ENCODE measurements at regions of chr13 and their contacts with region 1.

Region 1: DNA sequence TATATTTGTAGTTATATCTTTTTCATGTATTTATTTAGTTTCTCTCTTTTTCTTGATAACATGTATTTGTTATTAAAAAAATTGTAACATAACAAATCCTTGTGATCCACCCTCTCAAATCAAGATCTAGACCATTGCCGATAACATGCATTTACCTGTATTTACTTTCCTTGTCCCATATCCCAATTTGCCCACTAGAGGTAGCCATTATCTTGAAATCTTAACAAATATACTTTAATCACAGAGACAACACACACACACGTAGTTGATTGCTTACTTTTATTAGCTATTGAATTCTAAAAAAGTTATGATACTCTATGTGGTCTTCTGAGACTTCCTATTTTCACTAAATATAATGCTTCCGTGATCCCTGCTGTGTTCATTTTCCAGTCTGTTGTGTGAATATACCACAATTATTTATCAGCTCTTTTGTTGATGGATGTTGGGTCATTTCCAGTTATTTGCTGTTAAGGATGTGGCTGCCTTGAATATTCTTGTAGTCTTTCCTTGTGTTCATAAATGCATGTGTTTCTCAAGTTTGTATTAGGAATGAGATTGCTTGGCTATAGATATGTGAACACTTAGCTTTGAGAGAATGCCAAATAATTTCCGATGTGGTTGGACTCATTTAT is 31.3 kb upstream of the ZMYM2 start:
- DNase-seq: peak; percentile 62
- ATAC-seq: peak; percentile 77
- H3K4me3 ChIP-seq: peak overlapping the region in 1 of 2 experiments; percentile 25; a peak in 1 of 4 replicates
- H3K27ac ChIP-seq: peak overlapping the region; percentile 47; the same call in 1 of the 2 replicates
- H3K4me1 ChIP-seq: peaks cover 7 to 21% of the 10 kb centered on the region in 2 experiments; a peak in 3 of 4 replicates
- H3K27me3 ChIP-seq: no peaks in the 10 kb centered on the region
- CTCF ChIP-seq: peak; percentile 64 to 77 (median 65); a peak in 5 of 6 replicates
- POLR2A ChIP-seq: no peak
- RAD21 ChIP-seq: peak; percentile 68

Region 2: GRCh38 chr13:19726611-19727010 is 200.6 kb before region 1 on chr13:
- CTCF ChIA-PET with region 1: no interaction called
- POLR2A ChIA-PET with region 1: no interaction called
- RAD21 ChIA-PET with region 1: no interaction called
- intact Hi-C with region 1: no loop called
- DNase-seq: no peak
- ATAC-seq: no peak
- H3K4me3 ChIP-seq: no peak overlapping the region
- H3K27ac ChIP-seq: no peak overlapping the region
- H3K4me1 ChIP-seq: no peaks in the 10 kb centered on the region
- H3K27me3 ChIP-seq: no peaks in the 10 kb centered on the region
- CTCF ChIP-seq: no peak
- POLR2A ChIP-seq: no peak
- RAD21 ChIP-seq: no peak

Region 3: DNA sequence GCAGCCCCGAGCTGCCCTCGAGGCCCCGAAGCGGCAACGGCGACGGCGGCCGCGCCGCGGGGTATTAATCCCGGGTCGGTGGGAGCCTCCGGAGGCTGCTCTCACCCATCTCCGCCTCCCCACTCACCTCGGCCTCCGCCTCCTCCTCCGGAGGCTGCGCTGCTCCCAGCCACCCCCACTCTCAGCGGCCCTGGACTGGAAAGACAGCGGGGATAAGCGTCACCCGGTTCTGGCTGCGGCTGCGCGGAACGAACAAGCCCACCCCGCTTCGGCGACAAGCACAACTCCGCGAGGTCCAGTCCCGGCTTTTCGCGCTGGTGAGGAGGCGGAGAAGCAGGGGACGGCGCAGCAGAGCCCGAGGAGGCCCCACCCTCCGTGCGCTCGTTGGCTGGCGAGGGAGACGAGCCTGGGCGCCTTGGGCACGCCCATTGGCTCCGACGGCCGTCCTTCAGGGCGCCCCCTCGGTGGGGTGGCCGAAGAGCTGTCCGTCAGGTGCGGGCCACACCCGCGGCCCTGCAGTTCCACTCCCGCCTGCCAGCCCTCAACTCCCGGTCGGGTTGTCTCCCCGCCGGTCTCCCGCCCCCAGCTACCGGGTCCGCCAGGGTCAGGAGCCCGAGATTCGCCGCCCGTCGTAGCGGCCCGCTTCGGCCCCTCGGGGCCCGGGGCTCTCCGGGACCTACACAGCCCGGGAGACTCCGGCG is 63.8 kb before region 1 on chr13 and contains the start of gene ZMYM5:
- CTCF ChIA-PET with region 1: no interaction called
- POLR2A ChIA-PET with region 1: no interaction called
- RAD21 ChIA-PET with region 1: no interaction called
- intact Hi-C with region 1: no loop called
- DNase-seq: peak; percentile 95
- ATAC-seq: peak; percentile 88
- H3K4me3 ChIP-seq: peak within 1 kb of the TSS; percentile 79 to 90
- H3K27ac ChIP-seq: peak within 1 kb of the TSS; percentile 98
- H3K4me1 ChIP-seq: peaks cover 23 to 41% of the 10 kb centered on the region in 2 experiments
- H3K27me3 ChIP-seq: no peaks in the 10 kb centered on the region
- CTCF ChIP-seq: no peak
- POLR2A ChIP-seq: peak; percentile 19
- RAD21 ChIP-seq: no peak
- total RNA-seq, gene ZMYM5: 9.6 TPM

Region 4: DNA sequence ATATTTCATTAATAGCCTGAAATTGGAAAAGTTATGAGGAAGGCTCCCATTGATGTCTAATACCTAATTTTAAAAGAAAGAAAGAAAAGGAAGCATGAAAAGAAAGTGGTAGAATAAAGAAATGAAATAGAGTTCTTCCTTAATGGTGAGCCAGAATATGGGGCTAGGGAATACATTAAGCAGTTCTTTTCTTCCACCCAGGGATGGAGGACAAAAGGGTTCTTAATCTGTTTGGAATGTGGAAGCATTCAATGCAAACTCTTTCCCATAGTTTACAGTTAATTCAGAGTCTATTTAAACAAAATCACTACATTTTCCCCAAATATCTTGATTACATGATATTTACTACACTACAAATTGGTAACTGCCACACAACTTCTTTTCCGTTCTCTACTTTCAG is 12.9 kb after region 1 on chr13:
- CTCF ChIA-PET with region 1: interaction called, 13 read pairs
- POLR2A ChIA-PET with region 1: interaction called, 4 read pairs
- RAD21 ChIA-PET with region 1: no interaction called
- intact Hi-C with region 1: no loop called
- DNase-seq: no peak
- ATAC-seq: no peak
- H3K4me3 ChIP-seq: no peak overlapping the region
- H3K27ac ChIP-seq: no peak overlapping the region
- H3K4me1 ChIP-seq: no peaks in the 10 kb centered on the region
- H3K27me3 ChIP-seq: no peaks in the 10 kb centered on the region
- CTCF ChIP-seq: no peak
- POLR2A ChIP-seq: no peak
- RAD21 ChIP-seq: no peak

Region 5: GRCh38 chr13:19959831-19960652 is 32.8 kb after region 1 on chr13:
- CTCF ChIA-PET with region 1: interaction called, 8 read pairs
- POLR2A ChIA-PET with region 1: no interaction called
- RAD21 ChIA-PET with region 1: no interaction called
- intact Hi-C with region 1: loop called (anchors 2 kb)
- DNase-seq: peak; percentile 80
- ATAC-seq: peak; percentile 63
- H3K4me3 ChIP-seq: peak overlapping the region; percentile 85 to 89
- H3K27ac ChIP-seq: peak overlapping the region; percentile 95
- H3K4me1 ChIP-seq: peaks cover 10 to 16% of the 10 kb centered on the region in 2 experiments
- H3K27me3 ChIP-seq: no peaks in the 10 kb centered on the region
- CTCF ChIP-seq: peak; percentile 73 to 91 (median 83); a peak in 5 of 6 replicates
- POLR2A ChIP-seq: no peak
- RAD21 ChIP-seq: peak; percentile 64

Measured in HCT116 (cell line).